Right ventricle myocardium superior (tissue), 1 donor: ENCODE measurements at regions of chrX and their contacts with region 1.

Region 1: GRCh38 chrX:112043997-112044396 is 38.6 kb downstream of the TRPC5 start:
- DNase-seq: no peak
- ATAC-seq: no peak

Region 2: DNA sequence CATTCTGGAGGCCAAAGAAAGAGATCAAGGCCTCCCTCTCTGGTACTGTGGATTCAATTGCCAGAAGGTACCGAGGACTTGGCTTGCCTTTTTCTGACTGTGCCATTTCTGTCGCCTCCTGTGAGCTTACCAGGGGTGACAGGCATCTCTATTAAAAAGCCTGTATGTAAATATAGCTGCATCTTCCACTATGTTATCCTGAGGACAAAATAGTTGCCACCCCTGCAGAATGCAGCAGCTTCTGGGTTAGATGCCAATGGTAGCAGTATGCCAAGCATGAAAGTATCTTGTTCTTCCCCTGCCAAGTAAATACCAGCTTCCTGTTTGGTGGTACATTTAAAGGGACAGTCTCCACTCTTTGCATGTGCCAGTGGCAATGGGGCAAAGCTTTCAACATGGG is 157.3 kb before region 1 on chrX:
- intact Hi-C with region 1: loop called (anchors 10 kb)
- DNase-seq: no peak
- ATAC-seq: peak; percentile 97